Natural killer cell (primary cell): ENCODE measurements at regions of chr2 and their contacts with region 1.

Region 1: DNA sequence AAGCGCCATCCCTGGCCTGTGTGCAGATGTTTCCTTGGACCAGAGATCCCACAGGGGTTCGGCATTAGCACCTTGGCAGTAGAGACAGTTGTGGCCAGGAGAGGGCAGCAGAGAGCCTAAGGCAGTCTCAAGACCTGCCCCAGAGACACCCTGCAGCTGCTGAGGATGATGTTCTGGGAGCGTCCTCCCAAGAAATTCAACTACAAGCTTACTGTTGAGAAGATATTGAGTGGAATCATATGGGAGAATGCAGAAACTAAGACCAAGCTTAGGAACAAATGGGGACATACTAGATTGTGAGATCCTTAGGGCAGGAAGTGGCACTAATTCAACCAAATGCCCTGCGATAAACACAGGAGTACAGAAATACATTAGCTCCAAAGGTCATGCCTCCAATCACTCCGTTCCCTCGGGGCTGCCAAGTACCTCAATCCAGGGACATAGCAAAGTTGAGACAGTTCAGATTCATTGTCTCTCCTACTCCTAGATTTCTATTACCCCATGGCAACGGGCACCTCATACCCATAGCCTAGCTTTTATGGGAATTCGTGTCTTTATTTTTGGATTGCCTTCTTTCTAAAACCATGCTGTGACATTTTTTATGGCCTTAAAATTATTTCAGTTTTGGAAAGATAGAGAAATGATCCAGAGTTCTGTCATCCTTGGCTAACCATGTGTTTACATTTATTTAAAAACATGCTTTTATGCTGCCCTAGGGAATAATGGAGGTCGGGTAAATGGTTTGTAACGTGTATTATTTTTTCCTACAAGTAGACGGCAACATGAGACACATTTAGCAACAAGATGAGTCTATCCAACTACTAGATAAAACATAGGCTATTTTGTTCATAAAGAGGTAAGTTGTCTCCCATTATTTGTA is 2.2 kb upstream of the ERMN start:
- DNase-seq: peak; percentile 76 to 94
- ATAC-seq: peak; percentile 93 to 98 (median 95)
- H3K4me3 ChIP-seq: no peak overlapping the region
- H3K4me3 Mint-ChIP-seq: peak overlapping the region; percentile 37
- H3K27ac ChIP-seq: no peak overlapping the region
- H3K27ac Mint-ChIP-seq: peak overlapping the region in 1 of 2 donors; percentile 46
- H3K4me1 ChIP-seq: peaks cover 22% of the 10 kb centered on the region
- H3K4me1 Mint-ChIP-seq: peaks cover 33 to 41% of the 10 kb centered on the region in 2 donors
- H3K27me3 ChIP-seq: no peaks in the 10 kb centered on the region
- H3K27me3 Mint-ChIP-seq: no peaks in the 10 kb centered on the region
- CTCF ChIP-seq: peak; percentile 93

Region 2: GRCh38 chr2:157596992-157597681 is 269.3 kb after region 1 on chr2:
- intact Hi-C with region 1: loop called (anchors 1 kb)
- DNase-seq: peak; percentile 27 to 70
- ATAC-seq: peak; percentile 64 to 78 (median 72)
- H3K4me3 ChIP-seq: no peak overlapping the region
- H3K4me3 Mint-ChIP-seq: peak overlapping the region; percentile 13
- H3K27ac ChIP-seq: no peak overlapping the region
- H3K27ac Mint-ChIP-seq: no peak overlapping the region
- H3K4me1 ChIP-seq: peaks cover 5% of the 10 kb centered on the region
- H3K4me1 Mint-ChIP-seq: peaks cover 0 to 5% of the 10 kb centered on the region in 2 donors
- H3K27me3 ChIP-seq: peaks cover 12% of the 10 kb centered on the region
- H3K27me3 Mint-ChIP-seq: peaks cover 35 to 51% of the 10 kb centered on the region in 2 donors
- CTCF ChIP-seq: peak; percentile 58